Caco-2 (cell line): ENCODE measurements at regions of chr11 and their contacts with region 1.

Region 1: DNA sequence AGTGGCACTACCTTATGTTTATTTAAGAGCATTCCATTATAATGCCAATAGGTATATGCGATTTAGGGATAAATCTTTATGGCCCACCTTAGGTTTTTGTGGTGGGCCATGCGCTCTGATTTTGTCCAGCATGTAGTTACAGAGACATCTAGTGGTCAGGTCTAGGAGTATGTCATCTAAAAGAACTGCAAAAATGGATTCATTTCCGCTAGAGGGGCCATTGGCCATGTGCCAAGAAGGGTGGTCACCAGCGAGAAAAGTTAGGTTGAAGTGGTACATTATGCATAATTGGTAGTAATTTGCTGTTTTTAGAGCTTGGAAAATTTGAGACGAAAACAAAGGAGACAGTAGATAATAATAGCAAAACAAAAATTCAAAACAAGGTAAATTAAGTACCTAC is 27.7 kb downstream of the LRRC4C start:
- DNase-seq: peak in 1 of 2 experiments; percentile 19
- H3K4me3 ChIP-seq: no peak overlapping the region
- H3K4me3 Mint-ChIP-seq: no peak overlapping the region
- H3K27ac Mint-ChIP-seq: no peak overlapping the region
- H3K4me1 ChIP-seq: peaks cover 1% of the 10 kb centered on the region; the same call in 1 of the 2 replicates
- H3K4me1 Mint-ChIP-seq: peaks cover 3% of the 10 kb centered on the region
- H3K27me3 ChIP-seq: no peaks in the 10 kb centered on the region
- H3K27me3 Mint-ChIP-seq: peaks cover 2% of the 10 kb centered on the region
- CTCF ChIP-seq: peak; percentile 62 to 82

Region 2: DNA sequence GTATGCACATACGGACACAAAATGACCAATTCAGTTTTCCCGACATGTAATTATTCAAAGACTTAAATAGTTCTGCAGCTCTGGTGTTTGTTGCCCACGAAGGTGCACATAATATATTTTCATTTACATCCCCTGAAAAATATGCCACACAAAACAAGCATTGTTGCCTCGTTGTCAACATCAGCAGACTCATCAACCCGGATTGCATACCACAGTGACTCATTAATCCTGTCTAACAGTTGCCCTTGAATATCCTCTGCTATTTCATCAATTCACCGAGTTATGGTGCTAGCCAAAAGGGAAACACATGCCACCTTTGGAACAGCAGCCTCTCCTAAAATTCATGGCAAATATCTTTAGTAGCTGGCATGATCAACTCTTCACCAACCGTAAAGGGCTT is 554.5 kb before region 1 on chr11:
- CTCF ChIA-PET with region 1: interaction called, 5 read pairs
- POLR2A ChIA-PET with region 1: no interaction called
- intact Hi-C with region 1: loop called (anchors 5 kb)
- DNase-seq: no peak
- H3K4me3 ChIP-seq: no peak overlapping the region
- H3K4me3 Mint-ChIP-seq: no peak overlapping the region
- H3K27ac Mint-ChIP-seq: no peak overlapping the region
- H3K4me1 ChIP-seq: no peaks in the 10 kb centered on the region
- H3K4me1 Mint-ChIP-seq: no peaks in the 10 kb centered on the region
- H3K27me3 ChIP-seq: no peaks in the 10 kb centered on the region
- H3K27me3 Mint-ChIP-seq: peaks cover 3% of the 10 kb centered on the region
- CTCF ChIP-seq: no peak

Region 3: GRCh38 chr11:41245702-41246398 is 185.9 kb before region 1 on chr11:
- CTCF ChIA-PET with region 1: no interaction called
- POLR2A ChIA-PET with region 1: no interaction called
- intact Hi-C with region 1: loop called (anchors 1 kb)
- DNase-seq: peak; percentile 17 to 27
- H3K4me3 ChIP-seq: no peak overlapping the region
- H3K4me3 Mint-ChIP-seq: no peak overlapping the region
- H3K27ac Mint-ChIP-seq: no peak overlapping the region
- H3K4me1 ChIP-seq: no peaks in the 10 kb centered on the region
- H3K4me1 Mint-ChIP-seq: no peaks in the 10 kb centered on the region
- H3K27me3 ChIP-seq: no peaks in the 10 kb centered on the region
- H3K27me3 Mint-ChIP-seq: no peaks in the 10 kb centered on the region
- CTCF ChIP-seq: peak in 1 of 2 experiments; percentile 7

Region 4: DNA sequence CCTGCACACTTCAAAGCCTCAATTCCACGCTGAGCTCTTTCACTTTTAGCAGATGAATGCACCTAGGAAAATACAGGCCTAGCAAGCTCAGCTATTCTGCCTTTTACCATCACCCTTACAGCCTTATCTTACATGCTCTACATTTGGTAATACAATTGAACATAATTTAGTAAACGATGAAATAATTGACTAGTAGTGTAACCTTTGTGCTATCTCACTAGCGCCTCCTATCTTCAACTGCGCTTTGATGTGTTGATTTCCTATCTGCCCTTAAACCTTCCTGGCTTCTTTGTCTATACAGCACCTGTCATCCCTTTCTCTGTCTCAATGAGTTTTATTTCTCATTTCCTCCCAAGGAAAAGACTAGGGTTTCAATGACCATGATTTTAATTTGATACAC is 122.1 kb before region 1 on chr11:
- CTCF ChIA-PET with region 1: no interaction called
- POLR2A ChIA-PET with region 1: no interaction called
- intact Hi-C with region 1: loop called (anchors 10 kb)
- DNase-seq: no peak
- H3K4me3 ChIP-seq: no peak overlapping the region
- H3K4me3 Mint-ChIP-seq: no peak overlapping the region
- H3K27ac Mint-ChIP-seq: no peak overlapping the region
- H3K4me1 ChIP-seq: no peaks in the 10 kb centered on the region
- H3K4me1 Mint-ChIP-seq: no peaks in the 10 kb centered on the region
- H3K27me3 ChIP-seq: no peaks in the 10 kb centered on the region
- H3K27me3 Mint-ChIP-seq: no peaks in the 10 kb centered on the region
- CTCF ChIP-seq: no peak

Region 5: DNA sequence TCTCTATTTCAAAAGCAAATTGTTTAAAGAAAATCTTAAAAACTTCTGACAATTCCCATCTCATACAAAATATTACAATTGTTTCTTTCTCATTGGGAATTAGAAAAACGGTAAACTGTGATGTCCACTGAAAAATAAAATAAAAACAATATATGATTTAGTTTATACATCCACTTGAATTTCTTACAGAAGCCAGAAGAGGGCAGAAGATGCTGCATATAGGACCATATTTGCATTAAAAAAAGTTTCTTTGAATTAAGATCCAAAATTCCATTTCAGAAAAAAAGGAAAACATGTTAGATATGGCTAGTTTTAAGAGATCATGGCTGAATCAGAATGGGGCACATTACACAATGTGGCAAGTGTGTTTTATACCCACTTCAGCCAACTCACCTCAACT is 66.9 kb after region 1 on chr11:
- CTCF ChIA-PET with region 1: no interaction called
- POLR2A ChIA-PET with region 1: no interaction called
- intact Hi-C with region 1: no loop called
- DNase-seq: no peak
- H3K4me3 ChIP-seq: no peak overlapping the region
- H3K4me3 Mint-ChIP-seq: no peak overlapping the region
- H3K27ac Mint-ChIP-seq: no peak overlapping the region
- H3K4me1 ChIP-seq: peaks cover 7% of the 10 kb centered on the region
- H3K4me1 Mint-ChIP-seq: peaks cover 8% of the 10 kb centered on the region
- H3K27me3 ChIP-seq: no peaks in the 10 kb centered on the region
- H3K27me3 Mint-ChIP-seq: no peaks in the 10 kb centered on the region
- CTCF ChIP-seq: peak; percentile 25 to 40